Activated naive CD4-positive, alpha-beta T cell treated with anti-CD3 and anti-CD28 coated beads for 36 hours (primary cell): ENCODE measurements at regions of chr7 and their contacts with region 1.

Region 1: DNA sequence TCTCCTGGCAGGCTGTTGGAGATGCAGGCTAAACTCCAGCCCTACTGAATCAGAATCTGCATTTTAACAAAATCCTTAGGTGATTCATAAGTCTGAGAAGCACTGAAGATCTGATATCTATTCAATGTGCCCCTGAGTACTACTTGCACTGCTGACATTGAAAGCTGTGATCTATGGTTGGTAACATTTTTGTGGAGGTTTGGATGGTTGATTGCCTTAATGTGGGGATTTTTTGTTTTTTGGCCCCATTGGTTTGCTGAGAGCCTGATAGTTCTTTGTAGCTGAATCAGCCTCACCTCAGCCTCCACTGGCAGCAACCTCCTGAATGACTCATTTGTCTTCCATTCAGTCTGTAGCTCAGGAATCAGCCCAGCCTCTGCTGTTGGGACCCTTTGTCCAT is 14.7 kb upstream of the LRRN3 start:
- DNase-seq: peak; percentile 63
- H3K4me3 Mint-ChIP-seq: no peak overlapping the region
- H3K27ac Mint-ChIP-seq: peak overlapping the region; percentile 20
- H3K4me1 Mint-ChIP-seq: peaks cover 65% of the 10 kb centered on the region
- H3K27me3 Mint-ChIP-seq: no peaks in the 10 kb centered on the region

Region 2: GRCh38 chr7:110835218-110835617 is 241.0 kb before region 1 on chr7:
- CTCF ChIA-PET with region 1: no interaction called
- intact Hi-C with region 1: no loop called
- DNase-seq: no peak
- H3K4me3 Mint-ChIP-seq: no peak overlapping the region
- H3K27ac Mint-ChIP-seq: no peak overlapping the region
- H3K4me1 Mint-ChIP-seq: peaks cover 16% of the 10 kb centered on the region
- H3K27me3 Mint-ChIP-seq: no peaks in the 10 kb centered on the region

Region 3: DNA sequence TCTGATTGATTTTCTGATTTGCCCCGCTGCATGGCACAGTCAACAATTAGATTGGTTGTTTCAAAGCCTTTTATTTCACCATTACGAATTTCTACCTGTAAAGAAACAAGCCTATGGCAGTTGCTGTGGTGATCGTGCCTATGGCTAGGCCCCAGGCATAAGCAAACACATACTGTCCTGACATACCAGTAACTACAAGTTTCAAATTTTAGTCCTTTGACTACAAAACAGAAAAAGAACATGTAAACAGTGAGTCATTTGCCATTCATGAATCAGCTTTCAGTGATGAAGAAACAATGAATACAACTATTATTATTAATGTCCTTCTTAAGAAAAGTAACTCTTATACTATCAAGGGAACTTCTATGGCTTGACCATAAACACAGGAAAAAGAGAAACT is 153.3 kb before region 1 on chr7:
- CTCF ChIA-PET with region 1: no interaction called
- intact Hi-C with region 1: no loop called
- DNase-seq: no peak
- H3K4me3 Mint-ChIP-seq: no peak overlapping the region
- H3K27ac Mint-ChIP-seq: no peak overlapping the region
- H3K4me1 Mint-ChIP-seq: peaks cover 13% of the 10 kb centered on the region
- H3K27me3 Mint-ChIP-seq: no peaks in the 10 kb centered on the region

Region 4: GRCh38 chr7:111047595-111047994 is 28.6 kb before region 1 on chr7:
- CTCF ChIA-PET with region 1: no interaction called
- intact Hi-C with region 1: loop called (anchors 2 kb)
- DNase-seq: no peak
- H3K4me3 Mint-ChIP-seq: no peak overlapping the region
- H3K27ac Mint-ChIP-seq: no peak overlapping the region
- H3K4me1 Mint-ChIP-seq: peaks cover 8% of the 10 kb centered on the region
- H3K27me3 Mint-ChIP-seq: no peaks in the 10 kb centered on the region

Region 5: DNA sequence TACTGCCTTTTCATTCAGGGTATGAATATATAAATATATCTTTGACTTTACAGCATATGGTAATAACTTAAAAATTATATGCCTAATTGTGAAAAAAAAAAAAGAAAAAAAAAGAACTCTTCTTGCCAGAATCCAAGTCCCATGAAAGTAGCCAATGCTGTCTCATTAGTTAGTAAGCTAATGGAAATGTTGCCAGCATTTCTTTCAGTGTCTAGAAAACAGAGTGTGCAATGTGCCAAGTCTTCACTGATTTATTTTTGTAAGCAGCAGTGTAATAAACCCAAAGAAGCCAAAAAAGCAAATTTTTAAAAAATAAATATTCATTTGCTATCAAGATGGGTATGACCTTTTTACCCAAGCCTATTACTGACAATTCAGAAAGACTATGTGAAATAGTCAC is 16.4 kb before region 1 on chr7:
- CTCF ChIA-PET with region 1: interaction called, 3 read pairs
- intact Hi-C with region 1: loop called (anchors 2 kb)
- DNase-seq: no peak
- H3K4me3 Mint-ChIP-seq: no peak overlapping the region
- H3K27ac Mint-ChIP-seq: no peak overlapping the region
- H3K4me1 Mint-ChIP-seq: peaks cover 12% of the 10 kb centered on the region
- H3K27me3 Mint-ChIP-seq: no peaks in the 10 kb centered on the region